Sigmoid colon (tissue), 7 donors: ENCODE measurements at regions of chr22 and their contacts with region 1.

Region 1: DNA sequence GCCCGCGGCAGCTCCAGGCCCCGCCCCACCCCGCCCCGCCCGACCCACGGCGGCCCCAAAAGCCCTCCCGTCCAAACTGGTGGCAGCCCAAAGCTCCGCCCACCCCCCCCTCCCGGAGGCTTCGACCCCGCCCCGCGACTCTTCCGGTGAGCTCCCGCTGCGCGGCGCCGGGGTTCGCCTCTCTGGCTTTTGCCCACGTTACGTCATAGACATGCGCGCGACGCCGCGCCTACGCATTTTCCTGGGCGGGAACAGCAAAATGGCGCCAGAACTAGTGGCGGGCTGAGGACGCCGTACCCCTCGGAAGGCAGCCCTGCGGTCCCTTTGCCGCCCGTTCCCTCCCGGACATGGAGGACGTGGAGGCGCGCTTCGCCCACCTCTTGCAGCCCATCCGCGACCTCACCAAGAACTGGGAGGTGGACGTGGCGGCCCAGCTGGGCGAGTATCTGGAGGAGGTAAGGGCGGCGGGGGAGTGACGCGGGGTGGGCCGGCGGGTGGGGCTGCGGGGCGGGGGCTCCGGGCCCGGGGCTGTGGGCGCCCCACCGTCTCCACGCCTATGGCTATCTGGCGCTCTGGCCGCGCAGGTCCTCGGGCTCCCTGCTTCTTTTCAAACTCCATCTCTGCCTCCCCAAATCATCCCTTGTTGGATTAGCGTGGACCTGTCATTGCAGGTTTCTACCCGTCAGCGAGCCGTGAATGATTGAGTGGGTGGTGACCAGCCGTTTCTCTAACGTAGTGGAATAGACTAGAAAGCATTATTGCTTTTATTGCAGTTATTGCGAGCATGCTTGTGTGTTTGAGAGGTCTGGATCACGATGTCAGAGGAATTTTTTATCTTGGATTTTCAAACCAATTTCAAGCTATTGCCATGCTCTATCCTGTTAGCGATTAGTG is at the start of gene NCAPH2:
- DNase-seq: peak; percentile 98
- H3K4me3 ChIP-seq: peak within 1 kb of the TSS; percentile 83 to 97 (median 96)
- H3K27ac ChIP-seq: peak within 1 kb of the TSS; percentile 91 to 98 (median 94)
- H3K4me1 ChIP-seq: peaks cover 0 to 39% (median 24%) of the 10 kb centered on the region in 4 donors
- H3K27me3 ChIP-seq: no peaks in the 10 kb centered on the region
- CTCF ChIP-seq: no peak
- EP300 ChIP-seq: no peak
- POLR2A ChIP-seq: peak; percentile 41 to 70
- total RNA-seq, gene NCAPH2: 30.7 to 54.0 (median 35.6) TPM

Region 2: DNA sequence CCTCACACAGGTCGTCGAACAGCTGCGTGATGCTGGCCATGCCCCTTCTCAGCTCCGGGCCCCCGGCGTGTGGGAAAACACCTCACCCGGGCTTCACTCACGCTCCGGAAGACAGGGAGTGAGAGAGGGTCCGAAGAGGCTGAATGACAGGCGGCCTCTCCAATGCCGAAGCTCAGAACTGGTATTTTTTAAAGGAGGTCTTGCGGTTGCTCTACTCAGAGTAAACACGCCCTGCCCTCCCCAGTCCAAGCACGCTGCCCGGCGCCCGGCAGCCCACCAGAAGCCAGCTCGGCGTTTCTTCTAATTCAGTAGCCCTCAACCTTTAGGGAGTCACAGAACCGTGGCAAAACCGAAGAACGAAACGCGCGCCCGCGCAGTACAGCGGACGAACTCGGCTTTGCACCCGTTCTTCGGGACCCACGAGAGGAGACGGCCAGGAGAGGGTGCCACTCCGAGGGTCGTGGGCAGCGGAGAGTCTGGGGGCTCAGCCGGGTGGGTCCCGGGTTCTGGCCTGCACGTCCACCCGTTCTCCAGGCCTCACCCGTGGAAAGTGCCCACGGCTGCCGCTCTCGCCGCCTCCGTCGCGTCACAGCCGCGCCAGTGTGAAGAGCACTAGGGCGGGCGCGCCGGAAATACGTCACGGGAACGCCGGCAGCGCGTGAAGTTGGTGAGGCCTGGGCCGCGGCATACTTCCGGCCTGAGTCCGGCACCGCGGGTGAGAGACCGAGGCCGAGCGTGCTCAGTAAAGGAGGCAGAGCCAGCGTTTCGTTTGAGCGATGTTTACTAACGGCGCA is 263.6 kb before region 1 on chr22 and contains the start of gene TUBGCP6:
- intact Hi-C with region 1: loop called (anchors 5 kb)
- DNase-seq: peak; percentile 98
- H3K4me3 ChIP-seq: peak within 1 kb of the TSS; percentile 84 to 94 (median 89)
- H3K27ac ChIP-seq: peak within 1 kb of the TSS; percentile 92 to 97 (median 96)
- H3K4me1 ChIP-seq: peaks cover 3 to 67% (median 46%) of the 10 kb centered on the region in 4 donors
- H3K27me3 ChIP-seq: no peaks in the 10 kb centered on the region
- CTCF ChIP-seq: peak in 3 of 4 experiments; percentile 18 to 29 (median 21)
- EP300 ChIP-seq: peak in 1 of 4 donors; percentile 73
- POLR2A ChIP-seq: peak; percentile 83 to 87
- total RNA-seq, gene TUBGCP6: 23.5 to 67.0 (median 28.2) TPM

Region 3: GRCh38 chr22:50474668-50475492 is 33.4 kb before region 1 on chr22 and contains the start of gene SBF1:
- intact Hi-C with region 1: loop called (anchors 2 kb)
- DNase-seq: peak; percentile 95
- H3K4me3 ChIP-seq: peak within 1 kb of the TSS; percentile 62 to 99 (median 90)
- H3K27ac ChIP-seq: peak within 1 kb of the TSS; percentile 82 to 91 (median 87)
- H3K4me1 ChIP-seq: peaks cover 0 to 51% (median 49%) of the 10 kb centered on the region in 4 donors
- H3K27me3 ChIP-seq: peaks cover 0 to 14% (median 4%) of the 10 kb centered on the region in 3 donors
- CTCF ChIP-seq: no peak
- EP300 ChIP-seq: no peak
- POLR2A ChIP-seq: no peak
- total RNA-seq, gene SBF1: 23.2 to 53.7 (median 32.3) TPM

Region 4: GRCh38 chr22:50562523-50563412 is 54.5 kb after region 1 on chr22 and contains the start of gene SYCE3:
- intact Hi-C with region 1: loop called (anchors 2 kb)
- DNase-seq: peak; percentile 98
- H3K4me3 ChIP-seq: peak within 1 kb of the TSS; percentile 29 to 63 (median 55)
- H3K27ac ChIP-seq: peak within 1 kb of the TSS in 3 of 4 donors; percentile 36 to 53 (median 40)
- H3K4me1 ChIP-seq: peaks cover 0 to 11% (median 8%) of the 10 kb centered on the region in 4 donors
- H3K27me3 ChIP-seq: no peaks in the 10 kb centered on the region
- CTCF ChIP-seq: peak; percentile 78 to 97 (median 90)
- EP300 ChIP-seq: no peak
- POLR2A ChIP-seq: peak in 1 of 2 donors; percentile 85
- total RNA-seq, gene SYCE3: not detected

Region 5: GRCh38 chr22:50572965-50573845 is 65.0 kb after region 1 on chr22:
- intact Hi-C with region 1: no loop called
- DNase-seq: no peak
- H3K4me3 ChIP-seq: no peak overlapping the region
- H3K27ac ChIP-seq: no peak overlapping the region
- H3K4me1 ChIP-seq: peaks cover 0 to 6% (median 4%) of the 10 kb centered on the region in 4 donors
- H3K27me3 ChIP-seq: peaks cover 6 to 18% (median 12%) of the 10 kb centered on the region in 3 donors
- CTCF ChIP-seq: no peak
- EP300 ChIP-seq: no peak
- POLR2A ChIP-seq: no peak